H1 (cell line): ENCODE measurements at regions of chr20 and their contacts with region 1.

Region 1: GRCh38 chr20:44111712-44112335 is 75.2 kb downstream of the JPH2 start:
- DNase-seq: no peak
- H3K4me3 ChIP-seq: no peak overlapping the region
- H3K27ac ChIP-seq: no peak overlapping the region
- H3K4me1 ChIP-seq: no peaks in the 10 kb centered on the region; a peak in 1 of 7 replicates
- H3K27me3 ChIP-seq: no peaks in the 10 kb centered on the region
- CTCF ChIP-seq: no peak
- EP300 ChIP-seq: no peak
- POLR2A ChIP-seq: no peak
- RAD21 ChIP-seq: no peak

Region 2: GRCh38 chr20:43849496-43850197 is 262.2 kb before region 1 on chr20:
- CTCF ChIA-PET with region 1: no interaction called
- POLR2A ChIA-PET with region 1: no interaction called
- DNase-seq: no peak
- H3K4me3 ChIP-seq: no peak overlapping the region
- H3K27ac ChIP-seq: no peak overlapping the region
- H3K4me1 ChIP-seq: no peaks in the 10 kb centered on the region
- H3K27me3 ChIP-seq: no peaks in the 10 kb centered on the region
- CTCF ChIP-seq: no peak
- EP300 ChIP-seq: no peak
- POLR2A ChIP-seq: no peak
- RAD21 ChIP-seq: no peak

Region 3: DNA sequence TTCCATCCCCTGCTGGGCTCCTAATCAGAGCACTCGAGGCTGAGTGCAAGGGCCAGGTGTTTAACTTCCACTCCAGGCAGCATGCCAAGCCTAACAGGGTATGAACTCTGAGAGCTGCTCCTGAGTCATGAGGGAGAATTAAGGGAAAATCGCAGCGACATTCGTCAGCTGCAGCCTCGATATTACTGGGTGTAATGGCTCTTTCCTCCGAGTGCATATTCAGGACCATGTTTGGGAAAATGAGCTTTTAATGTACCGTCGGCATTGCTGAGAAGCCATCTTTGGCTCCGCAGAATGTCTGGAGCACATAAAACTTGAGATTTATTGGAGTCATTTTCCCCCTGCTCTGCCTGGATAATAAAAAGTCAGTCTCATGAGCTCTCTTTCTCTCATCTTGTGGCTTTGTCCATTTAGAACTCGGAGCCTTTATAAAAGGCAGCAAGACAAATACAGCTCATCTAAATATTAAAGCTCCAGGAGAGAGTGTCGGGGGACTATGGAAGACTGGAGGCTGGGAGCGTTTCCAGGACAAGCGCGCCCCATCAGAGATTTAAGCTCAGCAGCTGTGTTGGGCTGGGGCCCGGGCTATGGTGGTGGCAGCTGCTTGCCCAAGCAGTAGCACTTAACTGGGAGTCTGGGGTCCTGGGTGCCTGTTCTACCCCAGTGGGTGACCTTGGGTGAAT is 93.4 kb before region 1 on chr20:
- CTCF ChIA-PET with region 1: no interaction called
- POLR2A ChIA-PET with region 1: no interaction called
- DNase-seq: no peak
- H3K4me3 ChIP-seq: no peak overlapping the region
- H3K27ac ChIP-seq: no peak overlapping the region
- H3K4me1 ChIP-seq: peaks cover 0 to 11% (median 3%) of the 10 kb centered on the region in 4 experiments; a peak in 2 of 7 replicates
- H3K27me3 ChIP-seq: no peaks in the 10 kb centered on the region
- CTCF ChIP-seq: no peak
- EP300 ChIP-seq: no peak
- POLR2A ChIP-seq: no peak
- RAD21 ChIP-seq: no peak

Region 4: DNA sequence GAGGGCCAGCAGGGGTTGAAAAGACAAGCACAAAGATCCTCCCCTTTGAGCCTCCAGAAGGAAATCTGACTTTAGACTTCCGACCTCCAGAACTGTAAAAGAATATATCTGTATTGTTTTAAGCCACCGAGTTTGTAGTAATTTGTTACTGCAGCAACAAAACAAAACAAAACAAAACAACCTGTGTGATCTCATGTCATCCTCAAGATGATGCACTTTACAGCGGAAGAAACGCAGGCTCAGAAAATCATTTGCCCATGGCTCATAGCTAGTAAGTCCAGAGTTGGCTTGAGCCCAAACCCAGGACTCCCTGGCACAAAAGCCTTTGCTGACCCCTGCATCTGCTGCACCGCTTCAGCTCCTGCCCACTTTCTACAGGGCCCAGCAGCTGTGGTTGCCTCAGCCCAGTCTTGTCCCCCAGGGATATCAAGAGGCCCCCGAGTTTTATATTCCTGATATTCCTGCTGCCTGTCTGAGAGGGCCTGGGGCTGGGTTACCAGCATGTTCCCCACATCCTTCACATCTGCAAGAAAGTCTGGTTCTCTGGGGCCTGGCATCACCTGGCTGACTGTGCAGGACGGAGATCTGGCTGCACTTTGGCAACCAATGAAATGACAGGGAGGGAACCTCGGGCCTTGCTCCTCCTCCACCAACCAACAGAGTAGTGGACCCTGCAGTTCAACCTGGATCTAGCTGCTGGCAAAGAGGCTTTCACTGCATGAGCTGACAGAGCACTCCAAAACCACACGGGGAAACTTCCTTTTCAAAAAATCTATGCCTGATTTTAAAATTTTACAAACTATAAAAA is 18.3 kb after region 1 on chr20:
- CTCF ChIA-PET with region 1: interaction called, 20 read pairs
- POLR2A ChIA-PET with region 1: no interaction called
- DNase-seq: no peak
- H3K4me3 ChIP-seq: no peak overlapping the region
- H3K27ac ChIP-seq: no peak overlapping the region
- H3K4me1 ChIP-seq: no peaks in the 10 kb centered on the region
- H3K27me3 ChIP-seq: no peaks in the 10 kb centered on the region
- CTCF ChIP-seq: no peak
- EP300 ChIP-seq: no peak
- POLR2A ChIP-seq: no peak
- RAD21 ChIP-seq: no peak

Region 5: GRCh38 chr20:44142413-44142812 is 30.6 kb after region 1 on chr20:
- CTCF ChIA-PET with region 1: interaction called, 19 read pairs
- POLR2A ChIA-PET with region 1: interaction called, 3 read pairs
- DNase-seq: no peak
- H3K4me3 ChIP-seq: no peak overlapping the region
- H3K27ac ChIP-seq: no peak overlapping the region
- H3K4me1 ChIP-seq: peaks cover 0 to 4% (median under 1%) of the 10 kb centered on the region in 4 experiments; a peak in 3 of 7 replicates
- H3K27me3 ChIP-seq: no peaks in the 10 kb centered on the region
- CTCF ChIP-seq: no peak
- EP300 ChIP-seq: no peak
- POLR2A ChIP-seq: no peak
- RAD21 ChIP-seq: no peak

Region 6: GRCh38 chr20:44166477-44166876 is 54.7 kb after region 1 on chr20:
- CTCF ChIA-PET with region 1: interaction called, 21 read pairs
- POLR2A ChIA-PET with region 1: no interaction called
- DNase-seq: no peak
- H3K4me3 ChIP-seq: no peak overlapping the region
- H3K27ac ChIP-seq: no peak overlapping the region
- H3K4me1 ChIP-seq: no peaks in the 10 kb centered on the region
- H3K27me3 ChIP-seq: no peaks in the 10 kb centered on the region
- CTCF ChIP-seq: no peak
- EP300 ChIP-seq: no peak
- POLR2A ChIP-seq: no peak
- RAD21 ChIP-seq: no peak

Region 7: GRCh38 chr20:44196271-44196670 is 84.4 kb after region 1 on chr20:
- CTCF ChIA-PET with region 1: interaction called, 512 read pairs
- POLR2A ChIA-PET with region 1: interaction called, 10 read pairs
- DNase-seq: no peak
- H3K4me3 ChIP-seq: no peak overlapping the region
- H3K27ac ChIP-seq: no peak overlapping the region
- H3K4me1 ChIP-seq: no peaks in the 10 kb centered on the region
- H3K27me3 ChIP-seq: no peaks in the 10 kb centered on the region
- CTCF ChIP-seq: no peak
- EP300 ChIP-seq: no peak
- POLR2A ChIP-seq: no peak
- RAD21 ChIP-seq: no peak

Region 8: GRCh38 chr20:44388466-44389023 is 276.7 kb after region 1 on chr20:
- CTCF ChIA-PET with region 1: interaction called, 14 read pairs
- POLR2A ChIA-PET with region 1: no interaction called
- DNase-seq: peak; percentile 83 to 95
- H3K4me3 ChIP-seq: peak overlapping the region in 3 of 4 experiments; percentile 5 to 50 (median 32); a peak in 4 of 8 replicates
- H3K27ac ChIP-seq: no peak overlapping the region
- H3K4me1 ChIP-seq: peaks cover 0 to 5% (median 4%) of the 10 kb centered on the region in 4 experiments; a peak in 4 of 7 replicates
- H3K27me3 ChIP-seq: peaks cover 0 to 4% (median 0%) of the 10 kb centered on the region in 4 experiments; a peak in 3 of 7 replicates
- CTCF ChIP-seq: peak; percentile 90 to 93 (median 92)
- EP300 ChIP-seq: no peak
- POLR2A ChIP-seq: no peak
- RAD21 ChIP-seq: peak; percentile 89 to 90